ENCODE measurements at regions of chr11 and their contacts with region 1.

Region 1: DNA sequence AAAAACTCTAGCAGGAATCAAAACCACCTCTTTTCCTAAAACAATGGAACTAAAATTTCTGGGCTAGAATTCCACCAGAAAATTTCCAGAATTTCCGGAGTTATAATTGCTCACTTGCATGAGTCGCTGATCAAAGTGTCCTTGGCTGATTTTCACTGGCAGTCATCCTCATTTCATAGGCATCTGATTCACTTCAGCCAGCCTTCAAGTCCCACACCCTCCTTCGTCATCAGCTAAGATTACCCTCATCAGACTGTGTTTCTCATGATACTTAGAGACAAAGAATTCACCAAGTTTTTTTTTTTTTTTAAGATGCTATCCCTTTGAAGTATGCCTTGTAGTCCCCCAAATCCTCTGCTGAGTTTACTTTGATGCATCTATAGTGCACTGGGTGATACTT is 71.5 kb upstream of the RAB38 start:
- DNase-seq: no peak

Region 2: DNA sequence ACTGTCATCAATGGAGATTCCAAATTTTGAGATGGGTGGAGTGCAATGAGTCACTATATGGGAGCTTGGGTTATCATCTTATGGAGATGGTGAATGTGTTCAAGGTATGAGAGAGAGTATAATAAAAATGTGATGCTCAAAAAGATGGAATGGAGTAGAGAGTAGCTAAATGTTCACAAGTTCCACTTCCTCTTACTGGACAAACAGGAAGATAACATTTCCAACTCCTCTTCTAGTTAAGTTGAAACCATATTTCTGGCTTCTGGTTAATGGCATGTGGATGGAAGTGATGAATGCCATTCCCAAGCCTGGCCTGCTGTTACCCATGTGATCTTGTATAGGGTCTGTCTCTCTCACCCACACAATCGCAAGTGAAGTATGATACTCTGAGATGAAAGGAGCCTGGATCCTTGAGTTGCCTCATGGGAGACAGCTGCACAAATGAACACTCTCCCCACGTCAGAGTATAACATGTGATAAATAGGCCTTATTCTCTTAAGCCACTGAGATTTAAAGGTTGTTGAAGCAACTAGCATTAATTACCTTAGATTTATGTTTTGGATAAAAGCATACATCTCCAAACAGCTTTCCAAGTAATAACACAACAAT is 182.5 kb before region 1 on chr11:
- intact Hi-C with region 1: loop called in 1 of 2 experiments (anchors 5 kb)
- DNase-seq: no peak